Activated B cell treated with CpG ODN at 0.5 μM for 24 hours (primary cell): ENCODE measurements at regions of chr19 and their contacts with region 1.

Region 1: GRCh38 chr19:45038931-45039893 is at the start of gene CLASRP:
- DNase-seq: peak; percentile 90
- ATAC-seq: peak; percentile 89
- H3K4me3 Mint-ChIP-seq: peak within 1 kb of the TSS; percentile 98
- H3K27ac Mint-ChIP-seq: peak within 1 kb of the TSS; percentile 91
- H3K4me1 Mint-ChIP-seq: peaks cover 38% of the 10 kb centered on the region
- H3K27me3 Mint-ChIP-seq: no peaks in the 10 kb centered on the region
- CTCF ChIP-seq: no peak
- total RNA-seq, gene CLASRP: 133 and 172 TPM in 2 replicates

Region 2: GRCh38 chr19:45016388-45017319 is 22.6 kb before region 1 on chr19:
- CTCF ChIA-PET with region 1: no interaction called
- POLR2A ChIA-PET with region 1: interaction called, 14 read pairs
- intact Hi-C with region 1: loop called (anchors 2 kb)
- DNase-seq: peak; percentile 62
- ATAC-seq: peak; percentile 81
- H3K4me3 Mint-ChIP-seq: peak overlapping the region; percentile 64
- H3K27ac Mint-ChIP-seq: peak overlapping the region; percentile 89
- H3K4me1 Mint-ChIP-seq: peaks cover 22% of the 10 kb centered on the region
- H3K27me3 Mint-ChIP-seq: no peaks in the 10 kb centered on the region
- CTCF ChIP-seq: no peak

Region 3: GRCh38 chr19:45022010-45022409 is 17.2 kb before region 1 on chr19:
- CTCF ChIA-PET with region 1: no interaction called
- POLR2A ChIA-PET with region 1: interaction called, 14 read pairs
- intact Hi-C with region 1: loop called (anchors 2 kb)
- DNase-seq: no peak
- ATAC-seq: no peak
- H3K4me3 Mint-ChIP-seq: no peak overlapping the region
- H3K27ac Mint-ChIP-seq: no peak overlapping the region
- H3K4me1 Mint-ChIP-seq: peaks cover 7% of the 10 kb centered on the region
- H3K27me3 Mint-ChIP-seq: no peaks in the 10 kb centered on the region
- CTCF ChIP-seq: no peak

Region 4: DNA sequence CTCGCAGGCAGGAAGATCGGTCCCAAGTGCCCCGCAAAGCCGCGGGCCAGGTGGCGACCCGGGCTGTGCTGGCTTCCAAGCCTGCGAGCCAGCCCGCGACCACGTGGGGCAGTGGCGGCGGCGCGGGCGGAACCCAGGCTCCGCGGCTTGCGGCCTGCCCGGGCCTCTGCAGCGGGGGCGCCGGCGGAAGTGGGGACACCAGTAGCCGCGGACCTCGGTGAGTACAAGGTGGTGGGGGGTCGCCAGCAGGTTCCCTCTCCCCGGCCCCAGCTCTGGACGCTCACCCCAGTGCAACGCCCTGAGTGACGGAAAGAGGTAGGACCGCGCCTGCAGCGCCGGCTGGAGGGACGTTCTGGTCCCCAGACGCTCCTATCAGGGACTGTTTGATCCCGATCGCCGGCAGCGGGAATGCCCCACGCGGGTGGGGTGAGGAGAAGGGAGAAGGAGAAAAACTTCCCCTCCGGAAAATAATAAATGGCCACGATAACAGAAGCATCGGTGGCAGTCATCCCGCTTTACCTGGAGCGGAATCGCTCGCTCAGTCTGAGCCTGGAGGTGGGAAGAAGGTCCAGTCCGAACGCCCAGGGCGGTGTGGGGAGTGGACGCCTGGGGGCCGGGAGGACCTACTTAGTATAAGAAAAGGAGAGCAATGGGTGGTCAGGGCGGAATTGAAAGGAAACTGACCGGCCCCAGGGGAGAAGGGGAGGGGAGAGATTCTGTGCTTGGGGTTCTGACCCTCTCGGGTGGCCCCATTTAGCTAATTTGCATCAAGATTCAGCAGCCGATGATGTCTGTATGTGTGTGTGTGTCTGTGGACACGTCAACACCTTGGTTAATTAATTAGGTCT is 40.1 kb after region 1 on chr19 and contains the start of gene GEMIN7:
- CTCF ChIA-PET with region 1: interaction called, 3 read pairs
- POLR2A ChIA-PET with region 1: interaction called, 9 read pairs
- intact Hi-C with region 1: loop called (anchors 1 kb)
- DNase-seq: peak; percentile 85
- ATAC-seq: peak; percentile 33
- H3K4me3 Mint-ChIP-seq: peak within 1 kb of the TSS; percentile 97
- H3K27ac Mint-ChIP-seq: peak within 1 kb of the TSS; percentile 90
- H3K4me1 Mint-ChIP-seq: peaks cover 60% of the 10 kb centered on the region
- H3K27me3 Mint-ChIP-seq: no peaks in the 10 kb centered on the region
- CTCF ChIP-seq: no peak
- total RNA-seq, gene GEMIN7: 37.0 and 38.7 TPM in 2 replicates